Naive thymus-derived CD4-positive, alpha-beta T cell (primary cell): ENCODE measurements at regions of chr13 and their contacts with region 1.

Region 1: GRCh38 chr13:83048419-83048818 is 833.9 kb downstream of the SLITRK1 start:
- DNase-seq: no peak
- ATAC-seq: no peak
- H3K4me3 ChIP-seq: no peak overlapping the region
- H3K4me3 Mint-ChIP-seq: no peak overlapping the region
- H3K27ac ChIP-seq: no peak overlapping the region
- H3K27ac Mint-ChIP-seq: no peak overlapping the region
- H3K4me1 ChIP-seq: no peaks in the 10 kb centered on the region
- H3K4me1 Mint-ChIP-seq: no peaks in the 10 kb centered on the region
- H3K27me3 ChIP-seq: no peaks in the 10 kb centered on the region
- H3K27me3 Mint-ChIP-seq: no peaks in the 10 kb centered on the region

Region 2: DNA sequence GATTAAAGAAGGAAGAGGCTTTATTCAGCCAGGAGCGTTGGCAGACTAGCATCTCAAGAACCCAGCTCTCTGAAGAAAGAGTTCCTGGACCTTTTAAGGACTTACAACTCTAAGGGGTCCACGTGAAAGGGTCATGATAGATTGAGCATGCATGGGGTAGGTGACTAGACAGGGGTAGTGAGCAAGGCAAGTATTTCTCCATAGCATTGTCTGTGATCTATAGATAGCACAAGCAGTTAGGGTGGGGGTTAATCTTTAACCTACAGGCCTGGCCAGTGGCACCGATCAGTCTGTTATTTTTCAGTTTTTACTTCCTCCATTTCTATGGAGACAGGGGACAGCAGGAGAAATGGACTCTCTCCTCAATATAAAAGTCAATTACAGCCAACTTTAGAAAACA is 149.8 kb before region 1 on chr13:
- CTCF ChIA-PET with region 1: no interaction called
- POLR2A ChIA-PET with region 1: no interaction called
- intact Hi-C with region 1: no loop called
- DNase-seq: no peak
- ATAC-seq: no peak
- H3K4me3 ChIP-seq: no peak overlapping the region
- H3K4me3 Mint-ChIP-seq: no peak overlapping the region
- H3K27ac ChIP-seq: no peak overlapping the region
- H3K27ac Mint-ChIP-seq: no peak overlapping the region
- H3K4me1 ChIP-seq: no peaks in the 10 kb centered on the region
- H3K4me1 Mint-ChIP-seq: no peaks in the 10 kb centered on the region
- H3K27me3 ChIP-seq: no peaks in the 10 kb centered on the region
- H3K27me3 Mint-ChIP-seq: no peaks in the 10 kb centered on the region

Region 3: DNA sequence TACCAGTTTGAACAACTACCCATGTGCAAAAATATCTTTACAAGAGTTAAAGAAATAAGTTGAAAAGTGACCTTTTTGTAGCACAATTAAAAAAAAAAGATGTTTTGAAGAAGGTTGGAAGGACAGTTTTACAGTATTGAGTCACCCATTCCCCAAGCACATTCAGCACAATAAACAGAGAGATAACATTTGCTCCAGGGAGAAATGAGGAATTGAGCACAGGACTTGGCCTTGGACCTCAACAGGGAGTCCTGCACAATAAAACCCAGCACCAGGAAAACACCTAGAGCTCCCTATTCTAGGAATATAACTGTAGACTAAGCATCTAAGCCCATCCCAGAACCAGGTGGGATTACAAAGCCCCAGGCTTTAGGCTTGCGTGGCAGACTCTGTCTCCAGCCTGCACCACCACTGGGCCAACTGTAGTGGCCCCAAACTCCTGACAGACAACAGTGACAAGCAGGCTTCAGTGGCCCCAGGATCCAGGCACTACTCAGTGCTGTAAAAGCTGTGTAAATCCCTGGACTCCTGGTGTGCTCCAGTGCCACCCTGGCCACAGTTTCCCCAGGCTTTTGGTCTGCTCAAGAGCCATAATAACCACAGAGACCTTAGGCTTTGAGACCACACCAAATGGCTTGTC is 23.3 kb before region 1 on chr13:
- CTCF ChIA-PET with region 1: no interaction called
- POLR2A ChIA-PET with region 1: no interaction called
- intact Hi-C with region 1: loop called in 1 of 2 experiments (anchors 2 kb)
- DNase-seq: no peak
- ATAC-seq: no peak
- H3K4me3 ChIP-seq: no peak overlapping the region
- H3K4me3 Mint-ChIP-seq: no peak overlapping the region
- H3K27ac ChIP-seq: no peak overlapping the region
- H3K27ac Mint-ChIP-seq: no peak overlapping the region
- H3K4me1 ChIP-seq: no peaks in the 10 kb centered on the region
- H3K4me1 Mint-ChIP-seq: peaks cover 0 to 1% (median 0%) of the 10 kb centered on the region in 7 donors
- H3K27me3 ChIP-seq: no peaks in the 10 kb centered on the region
- H3K27me3 Mint-ChIP-seq: no peaks in the 10 kb centered on the region